AG04450 (cell line): ENCODE measurements at regions of chr11 and their contacts with region 1.

Region 1: GRCh38 chr11:65274735-65275682 is 13.2 kb downstream of the POLA2 start:
- DNase-seq: peak; percentile 96
- H3K4me3 ChIP-seq: no peak overlapping the region
- H3K27ac ChIP-seq: peak overlapping the region; percentile 65
- H3K27me3 ChIP-seq: no peaks in the 10 kb centered on the region
- CTCF ChIP-seq: peak; percentile 79

Region 2: DNA sequence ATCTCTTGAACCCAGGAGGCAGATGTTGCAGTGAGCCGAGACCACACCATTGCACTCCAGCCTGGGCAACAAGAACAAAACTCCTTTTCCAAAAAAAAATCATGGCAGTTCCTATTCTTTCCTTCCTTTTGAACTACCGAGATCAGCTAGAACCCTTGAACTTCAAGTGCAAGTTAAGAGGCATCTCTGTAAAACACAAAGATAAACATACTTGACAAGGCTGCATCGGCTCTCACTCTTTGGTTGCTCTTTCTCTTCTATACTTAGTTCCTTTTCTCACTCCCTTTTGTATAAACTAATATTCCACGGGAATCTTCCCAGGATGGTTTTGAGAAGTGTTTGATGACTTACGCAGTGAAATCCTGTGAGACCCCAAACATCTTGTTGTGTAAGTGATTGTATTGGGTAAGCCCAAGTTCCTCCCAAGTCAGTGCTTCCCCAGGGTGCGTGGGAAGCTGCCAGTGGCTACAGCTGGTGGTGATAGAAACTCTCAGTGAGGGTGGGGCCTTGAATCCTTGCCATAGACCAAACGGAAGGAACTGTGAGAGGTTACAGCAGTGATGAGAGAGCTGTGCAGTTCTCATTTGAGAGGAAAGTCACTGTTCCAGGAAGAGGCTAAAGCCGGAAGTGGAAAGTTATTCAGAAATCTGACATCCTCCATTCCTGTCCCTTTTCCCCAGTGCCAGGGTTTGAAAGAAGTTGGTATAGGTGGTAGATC is 15.6 kb after region 1 on chr11:
- CTCF ChIA-PET with region 1: interaction called, 19 read pairs
- POLR2A ChIA-PET with region 1: interaction called, 45 read pairs
- DNase-seq: peak; percentile 99
- H3K4me3 ChIP-seq: peak overlapping the region; percentile 29
- H3K27ac ChIP-seq: peak overlapping the region; percentile 100
- H3K27me3 ChIP-seq: no peaks in the 10 kb centered on the region
- CTCF ChIP-seq: no peak

Region 3: DNA sequence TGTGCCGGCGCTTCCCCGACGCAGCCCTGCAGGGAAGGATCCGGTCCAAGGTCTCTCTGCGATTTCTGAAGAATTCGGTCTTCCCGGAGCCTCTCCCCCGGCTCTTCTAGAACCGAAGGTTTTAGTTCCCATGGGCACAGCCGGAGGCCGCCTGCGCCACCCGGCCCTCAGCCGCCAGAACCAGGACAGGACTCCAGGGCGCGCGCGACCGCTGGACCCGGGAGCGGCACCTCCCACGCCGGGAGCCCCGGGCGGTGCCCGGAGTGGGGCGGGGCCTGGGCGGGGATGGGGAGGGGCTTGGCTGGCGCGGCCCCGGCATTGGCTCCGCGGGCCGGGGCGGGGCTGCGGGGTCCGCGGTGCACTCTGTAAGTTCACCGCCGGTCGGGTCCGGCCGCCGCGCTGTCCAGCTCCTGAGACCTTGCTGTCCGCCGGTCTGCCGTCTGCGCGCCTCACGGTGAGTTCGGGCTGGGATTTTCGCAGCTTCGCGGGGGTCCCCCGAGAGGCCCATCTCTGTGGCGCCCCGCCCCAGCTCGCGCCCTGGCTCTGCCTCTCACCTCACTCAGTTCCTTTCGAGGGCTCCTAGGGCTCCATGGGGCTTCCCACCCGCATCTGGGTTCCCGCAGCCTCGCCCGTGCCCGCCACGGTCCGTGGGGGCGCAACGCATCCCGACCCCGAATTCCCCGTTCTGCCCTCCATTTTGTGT is 39.6 kb after region 1 on chr11 and contains the start of gene CDC42EP2:
- CTCF ChIA-PET with region 1: interaction called, 271 read pairs
- POLR2A ChIA-PET with region 1: interaction called, 68 read pairs
- DNase-seq: no peak
- H3K4me3 ChIP-seq: peak within 1 kb of the TSS; percentile 90
- H3K27ac ChIP-seq: peak within 1 kb of the TSS; percentile 93
- H3K27me3 ChIP-seq: no peaks in the 10 kb centered on the region
- CTCF ChIP-seq: no peak
- polyA plus RNA-seq, gene CDC42EP2: 14.3 and 21.1 TPM in 2 replicates

Region 4: GRCh38 chr11:65354265-65355012 is 79.4 kb after region 1 on chr11 and contains the start of gene TIGD3:
- CTCF ChIA-PET with region 1: interaction called, 43 read pairs
- POLR2A ChIA-PET with region 1: no interaction called
- DNase-seq: peak; percentile 73
- H3K4me3 ChIP-seq: peak within 1 kb of the TSS; percentile 70
- H3K27ac ChIP-seq: peak within 1 kb of the TSS; percentile 65
- H3K27me3 ChIP-seq: peaks cover 24% of the 10 kb centered on the region
- CTCF ChIP-seq: no peak
- polyA plus RNA-seq, gene TIGD3: 0.07 and 0.11 TPM in 2 replicates

Region 5: GRCh38 chr11:65516135-65516935 is 241.3 kb after region 1 on chr11:
- CTCF ChIA-PET with region 1: interaction called, 7 read pairs
- POLR2A ChIA-PET with region 1: interaction called, 12 read pairs
- DNase-seq: no peak
- H3K4me3 ChIP-seq: no peak overlapping the region
- H3K27ac ChIP-seq: no peak overlapping the region
- H3K27me3 ChIP-seq: no peaks in the 10 kb centered on the region
- CTCF ChIP-seq: no peak